A549 (cell line): ENCODE measurements at regions of chr12 and their contacts with region 1.

Region 1: GRCh38 chr12:109093022-109093918 is at the start of gene ALKBH2:
- DNase-seq: peak; percentile 93 to 95
- ATAC-seq: peak; percentile 68 to 70
- H3K4me3 ChIP-seq: peak within 1 kb of the TSS; percentile 56
- H3K27ac ChIP-seq: peak within 1 kb of the TSS; percentile 77 to 90
- H3K4me1 ChIP-seq: peaks cover 16% of the 10 kb centered on the region; the same call in 1 of the 3 replicates
- CTCF ChIP-seq: peak; percentile 95
- EP300 ChIP-seq: no peak
- POLR2A ChIP-seq: peak; percentile 94
- RAD21 ChIP-seq: peak; percentile 96
- polyA plus RNA-seq, gene ALKBH2: 48.7 and 53.9 TPM in 2 replicates

Region 2: DNA sequence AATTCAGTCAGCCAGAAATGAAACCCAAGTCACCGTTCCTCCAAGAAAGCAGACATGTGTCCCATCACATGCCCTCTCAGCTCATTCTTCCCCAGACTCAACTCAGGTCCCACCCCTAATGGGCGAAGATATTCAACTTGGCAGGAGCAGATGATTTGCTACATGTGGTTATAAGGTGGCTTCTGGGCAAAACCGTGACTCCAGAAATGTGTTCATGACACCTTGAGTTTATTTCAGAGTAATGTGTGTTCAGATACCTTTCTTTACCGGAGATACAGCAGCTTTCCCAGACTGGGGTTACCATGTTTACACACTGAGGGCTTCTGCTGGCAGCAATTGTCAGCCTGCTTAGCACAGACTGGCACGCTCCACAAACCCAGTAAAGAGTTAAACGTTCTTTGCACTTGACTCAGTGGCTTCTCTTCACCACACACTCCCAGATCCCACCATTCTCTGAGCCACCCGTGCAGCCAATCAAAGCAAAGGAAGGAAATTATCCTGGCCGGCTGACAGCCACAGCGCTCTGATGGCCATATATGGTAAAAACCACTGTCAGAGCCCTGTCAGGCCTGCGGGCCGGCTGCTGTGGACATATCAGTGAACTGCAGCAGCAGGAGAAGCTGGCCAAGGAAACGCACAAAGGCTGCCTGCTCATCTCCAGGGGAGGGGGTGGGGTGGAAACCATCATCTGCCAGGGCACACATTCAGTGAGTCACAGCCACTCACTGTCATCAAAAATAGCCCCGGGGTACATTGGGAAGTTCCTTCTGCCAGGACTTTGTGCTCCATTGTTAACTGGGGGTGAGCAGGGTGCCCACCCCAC is 401.9 kb before region 1 on chr12:
- CTCF ChIA-PET with region 1: no interaction called
- POLR2A ChIA-PET with region 1: interaction called, 10 read pairs
- DNase-seq: peak; percentile 93 to 99
- ATAC-seq: peak; percentile 95 to 97
- H3K4me3 ChIP-seq: peak overlapping the region; percentile 37
- H3K27ac ChIP-seq: peak overlapping the region; percentile 91
- H3K4me1 ChIP-seq: peaks cover 71% of the 10 kb centered on the region
- CTCF ChIP-seq: no peak
- EP300 ChIP-seq: peak; percentile 40; a peak in 1 of 5 replicates
- POLR2A ChIP-seq: peak; percentile 13; the same call in 1 of the 2 replicates
- RAD21 ChIP-seq: peak in 1 of 2 experiments; percentile 23; a peak in 1 of 5 replicates

Region 3: DNA sequence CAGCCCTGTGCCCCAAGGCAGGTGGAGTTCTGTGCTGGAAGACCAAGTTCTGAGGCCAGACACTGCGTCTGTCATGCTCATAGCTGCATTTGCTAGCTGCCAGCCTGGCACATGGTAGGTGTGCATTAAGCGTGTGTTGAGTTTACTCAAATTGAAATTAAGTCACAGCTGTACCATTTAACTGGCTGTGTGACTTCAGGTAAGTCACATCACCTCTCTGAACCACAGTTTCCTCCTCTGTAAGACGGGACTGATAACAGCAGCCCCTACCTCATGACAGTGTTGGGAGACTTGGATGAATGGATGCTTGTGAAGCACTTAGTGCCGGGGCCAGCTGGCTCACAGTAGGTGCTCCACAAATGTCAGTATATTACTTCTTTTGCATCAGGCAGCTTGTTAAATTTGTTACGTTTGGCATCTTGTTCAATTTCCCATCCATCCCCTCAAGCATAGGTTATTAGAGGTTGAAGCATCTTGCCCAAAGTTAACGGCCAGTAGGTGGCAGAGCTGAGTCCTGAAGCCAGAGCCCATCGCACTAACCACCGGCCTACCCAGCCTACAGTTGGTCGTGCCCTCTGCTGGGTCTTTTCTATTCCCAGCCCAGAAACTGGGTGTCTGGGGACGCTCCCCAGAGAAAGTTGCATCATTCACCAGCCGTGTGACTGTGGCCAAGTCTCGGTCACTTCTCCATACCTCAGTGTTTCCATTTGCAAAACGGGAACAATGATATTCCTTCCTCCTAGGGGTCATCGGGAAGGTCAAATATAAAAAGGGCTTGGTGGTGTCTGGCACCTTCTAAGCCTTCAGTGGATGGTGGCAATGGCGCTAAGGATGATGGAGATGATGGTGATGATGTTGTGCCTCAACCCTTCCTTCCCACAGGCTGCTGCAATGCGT is 208.9 kb before region 1 on chr12:
- CTCF ChIA-PET with region 1: interaction called, 11 read pairs
- POLR2A ChIA-PET with region 1: no interaction called
- DNase-seq: peak; percentile 43 to 66
- ATAC-seq: peak; percentile 48 to 76; a peak in 4 of 6 replicates
- H3K4me3 ChIP-seq: no peak overlapping the region
- H3K27ac ChIP-seq: no peak overlapping the region
- H3K4me1 ChIP-seq: no peaks in the 10 kb centered on the region
- CTCF ChIP-seq: peak; percentile 63
- EP300 ChIP-seq: no peak
- POLR2A ChIP-seq: no peak
- RAD21 ChIP-seq: peak; percentile 35 to 61; a peak in 4 of 5 replicates

Region 4: DNA sequence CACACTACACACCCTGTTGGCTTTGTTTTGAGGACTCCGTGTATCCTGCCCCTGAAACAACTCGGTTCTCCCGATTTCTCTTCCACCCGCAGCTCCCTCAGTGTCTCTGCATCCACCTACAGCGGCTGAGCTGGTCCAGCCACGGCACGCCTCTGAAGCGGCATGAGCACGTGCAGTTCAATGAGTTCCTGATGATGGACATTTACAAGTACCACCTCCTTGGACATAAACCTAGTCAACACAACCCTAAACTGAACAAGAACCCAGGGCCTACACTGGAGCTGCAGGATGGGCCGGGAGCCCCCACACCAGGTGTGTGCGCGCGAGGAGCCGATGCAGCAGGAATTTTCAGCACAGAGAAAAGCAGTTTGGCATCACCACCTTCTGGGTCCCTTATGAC is 10.5 kb before region 1 on chr12:
- CTCF ChIA-PET with region 1: interaction called, 13 read pairs
- POLR2A ChIA-PET with region 1: no interaction called
- DNase-seq: no peak
- ATAC-seq: no peak
- H3K4me3 ChIP-seq: no peak overlapping the region
- H3K27ac ChIP-seq: no peak overlapping the region
- H3K4me1 ChIP-seq: peaks cover 6% of the 10 kb centered on the region
- CTCF ChIP-seq: no peak
- EP300 ChIP-seq: no peak
- POLR2A ChIP-seq: no peak
- RAD21 ChIP-seq: no peak

Region 5: DNA sequence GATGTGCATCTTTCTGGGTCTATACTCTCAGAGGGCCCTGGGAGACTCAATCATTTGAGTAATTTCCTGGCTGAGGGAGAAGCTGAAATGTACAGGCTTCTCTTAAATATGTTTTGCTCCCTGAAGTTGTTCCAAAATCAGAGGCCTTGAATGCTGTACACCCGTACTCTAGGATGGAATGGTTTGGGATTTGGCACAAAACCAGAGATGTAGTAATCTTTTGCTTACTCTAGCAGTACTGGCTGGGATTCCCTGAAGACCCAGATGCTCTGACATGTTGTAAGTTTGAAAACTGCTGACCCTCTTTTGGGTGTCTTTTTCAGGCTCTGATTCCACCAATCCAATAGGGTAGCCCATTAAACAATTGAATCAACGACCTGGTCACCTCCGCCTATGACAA is 33.5 kb after region 1 on chr12:
- CTCF ChIA-PET with region 1: no interaction called
- POLR2A ChIA-PET with region 1: no interaction called
- DNase-seq: no peak
- ATAC-seq: no peak
- H3K4me3 ChIP-seq: no peak overlapping the region
- H3K27ac ChIP-seq: no peak overlapping the region
- H3K4me1 ChIP-seq: peaks cover 8% of the 10 kb centered on the region; the same call in 1 of the 3 replicates
- CTCF ChIP-seq: no peak
- EP300 ChIP-seq: no peak
- POLR2A ChIP-seq: no peak
- RAD21 ChIP-seq: no peak